OCI-LY7 (cell line): ENCODE measurements at regions of chr10 and their contacts with region 1.

Region 1: DNA sequence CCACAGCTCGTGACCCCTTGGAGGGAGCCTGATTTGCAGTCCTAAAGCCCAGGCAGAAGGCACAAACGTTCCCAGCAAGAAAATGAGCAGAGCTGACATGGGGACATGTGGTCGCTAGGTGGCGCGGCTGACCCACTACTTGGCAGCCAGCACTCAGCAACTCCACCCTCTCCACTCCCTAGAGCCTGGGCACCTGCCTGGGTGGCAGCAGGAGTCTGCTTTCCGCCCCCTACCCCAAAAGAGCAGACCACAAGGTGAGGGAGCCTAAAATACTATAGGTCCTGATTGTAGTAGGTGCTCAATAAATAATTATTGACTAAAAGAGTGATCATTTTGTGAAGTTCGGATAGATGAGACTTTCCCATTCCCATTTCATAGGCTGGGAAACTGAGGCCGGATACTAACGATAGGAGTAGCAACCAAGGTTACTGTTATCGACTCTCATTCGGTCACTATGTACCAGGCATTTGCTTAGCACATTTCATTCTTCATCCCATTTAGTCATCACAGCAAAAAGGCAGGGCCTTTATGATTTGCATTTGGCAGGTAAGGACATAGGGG is 57.4 kb downstream of the NEUROG3 start:
- DNase-seq: peak; percentile 70
- H3K4me3 ChIP-seq: no peak overlapping the region
- H3K27ac ChIP-seq: no peak overlapping the region
- H3K4me1 ChIP-seq: no peaks in the 10 kb centered on the region
- CTCF ChIP-seq: peak; percentile 87

Region 2: GRCh38 chr10:69716711-69717560 is 201.2 kb after region 1 on chr10:
- CTCF ChIA-PET with region 1: no interaction called
- POLR2A ChIA-PET with region 1: no interaction called
- intact Hi-C with region 1: loop called (anchors 10 kb)
- DNase-seq: peak; percentile 59
- H3K4me3 ChIP-seq: no peak overlapping the region
- H3K27ac ChIP-seq: no peak overlapping the region
- H3K4me1 ChIP-seq: no peaks in the 10 kb centered on the region
- CTCF ChIP-seq: peak; percentile 83